Esophagus muscularis mucosa (tissue), 4 donors: ENCODE measurements at regions of chr15 and their contacts with region 1.

Region 1: DNA sequence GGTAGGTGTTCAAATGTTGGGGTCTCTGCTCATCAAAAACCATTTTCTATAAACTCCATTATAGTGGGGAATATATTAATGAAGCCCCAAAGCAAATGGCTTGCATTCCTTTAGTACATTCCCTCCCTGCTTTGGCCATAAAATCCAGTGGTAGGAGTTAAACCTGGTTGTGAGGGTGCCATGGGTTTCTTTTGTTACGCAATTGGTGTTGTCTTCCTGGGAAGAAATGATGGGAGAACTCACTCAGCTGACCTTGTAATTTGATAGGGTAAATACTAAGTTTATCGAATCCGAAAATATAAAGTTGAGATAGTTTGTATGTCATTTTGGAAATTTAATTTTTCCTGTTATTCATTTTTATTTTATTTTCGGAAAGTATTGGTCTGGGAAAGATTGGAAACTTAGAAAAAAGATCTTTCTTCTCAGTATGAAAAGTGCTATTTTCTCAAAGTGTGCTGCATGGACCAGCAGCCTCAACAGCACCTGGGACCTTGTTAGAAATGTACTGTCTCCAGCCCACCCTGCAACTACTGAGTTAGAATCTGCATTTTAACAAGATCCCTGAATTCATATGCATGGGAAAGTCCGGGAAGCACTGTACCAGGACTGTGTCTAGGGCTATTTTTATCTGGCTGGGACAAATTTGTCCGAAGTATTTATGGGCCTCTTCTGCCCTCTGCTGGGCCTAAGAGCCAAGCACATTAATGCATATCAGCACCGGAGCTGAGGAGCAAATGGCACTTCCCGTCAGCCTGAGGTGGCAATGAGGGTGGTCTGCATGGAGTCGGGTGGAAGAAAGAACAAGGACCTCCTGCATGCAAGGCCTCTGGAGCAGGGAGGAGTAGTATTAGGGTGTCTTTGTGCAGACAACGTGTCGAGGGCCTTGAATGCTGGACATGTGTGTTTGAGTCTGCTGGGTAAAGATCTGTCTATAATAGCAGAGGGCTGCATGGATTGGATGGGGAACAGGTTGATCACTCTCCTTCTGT is 54.7 kb downstream of the FAM81A start:
- DNase-seq: no peak
- H3K4me3 ChIP-seq: no peak overlapping the region
- H3K27ac ChIP-seq: no peak overlapping the region
- H3K4me1 ChIP-seq: peaks cover 6 to 10% (median 7%) of the 10 kb centered on the region in 4 donors
- H3K27me3 ChIP-seq: no peaks in the 10 kb centered on the region
- CTCF ChIP-seq: peak; percentile 79 to 86 (median 85)
- EP300 ChIP-seq: no peak
- POLR2A ChIP-seq: no peak

Region 2: DNA sequence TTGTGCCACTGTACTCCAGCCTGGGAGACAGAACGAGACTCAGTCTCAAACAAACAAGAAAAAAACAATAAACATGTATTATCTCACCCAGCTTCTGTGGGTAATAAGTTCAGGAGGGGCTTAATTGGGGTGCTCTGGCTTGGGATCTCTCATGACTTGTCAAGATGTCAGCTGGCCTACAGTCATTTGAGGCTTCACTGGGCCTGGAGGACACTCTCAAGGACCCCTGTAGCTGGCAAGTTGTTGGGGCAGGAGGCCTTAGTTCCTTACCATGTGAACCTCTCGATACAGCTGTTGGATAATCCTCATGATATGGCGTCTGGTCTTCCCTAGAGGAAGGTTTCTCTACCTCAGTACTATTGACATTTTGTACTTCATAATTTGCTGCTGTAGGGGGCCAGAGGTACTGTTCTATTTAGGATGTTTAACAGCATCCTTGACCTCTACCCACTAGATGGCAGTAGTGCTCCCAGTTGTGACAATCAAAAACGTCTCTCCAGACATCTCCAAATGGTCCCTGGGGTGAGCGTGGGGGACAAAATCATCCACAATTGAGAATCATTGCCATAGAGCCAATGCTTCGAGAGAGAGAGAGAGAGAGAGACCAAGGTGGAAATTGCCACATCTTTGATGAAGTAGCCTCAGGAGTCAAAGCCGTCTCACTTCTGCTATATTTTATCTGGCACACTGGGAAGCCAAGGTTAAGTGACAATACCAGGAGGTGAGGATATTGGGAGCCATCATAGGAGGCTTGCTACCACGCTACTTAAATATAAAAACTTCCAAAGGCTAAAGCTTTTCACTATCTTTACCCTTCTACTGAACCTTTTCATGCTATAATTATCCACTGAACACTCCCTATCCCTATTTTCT is 535.3 kb before region 1 on chr15:
- intact Hi-C with region 1: loop called (anchors 5 kb)
- DNase-seq: no peak
- H3K4me3 ChIP-seq: no peak overlapping the region
- H3K27ac ChIP-seq: no peak overlapping the region
- H3K4me1 ChIP-seq: no peaks in the 10 kb centered on the region
- H3K27me3 ChIP-seq: no peaks in the 10 kb centered on the region
- CTCF ChIP-seq: peak; percentile 53 to 74 (median 55)
- EP300 ChIP-seq: no peak
- POLR2A ChIP-seq: no peak

Region 3: DNA sequence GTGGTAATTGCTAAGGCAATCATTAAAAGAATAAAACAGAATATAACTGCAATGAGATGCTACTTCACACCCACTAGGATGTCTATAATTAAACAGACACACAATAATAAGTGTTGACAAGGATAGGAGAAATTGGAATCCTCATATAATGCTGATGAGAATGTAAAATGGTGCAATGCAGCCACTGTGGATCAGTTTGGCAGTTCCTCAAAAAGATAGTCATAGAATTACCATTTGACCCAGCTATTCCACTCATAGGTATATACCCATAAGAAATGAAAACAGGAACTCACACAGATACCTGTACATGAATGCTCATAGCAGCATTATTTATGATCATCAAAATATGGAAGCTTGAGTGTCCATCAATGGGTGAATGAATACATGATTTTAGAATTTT is 514.8 kb before region 1 on chr15:
- intact Hi-C with region 1: loop called (anchors 5 kb)
- DNase-seq: no peak
- H3K4me3 ChIP-seq: no peak overlapping the region
- H3K27ac ChIP-seq: no peak overlapping the region
- H3K4me1 ChIP-seq: peaks cover 0 to 12% (median 5%) of the 10 kb centered on the region in 4 donors
- H3K27me3 ChIP-seq: no peaks in the 10 kb centered on the region
- CTCF ChIP-seq: no peak
- EP300 ChIP-seq: no peak
- POLR2A ChIP-seq: no peak

Region 4: GRCh38 chr15:59104912-59105732 is 387.6 kb before region 1 on chr15 and contains the start of gene CCNB2:
- intact Hi-C with region 1: loop called (anchors 10 kb)
- DNase-seq: peak; percentile 95
- H3K4me3 ChIP-seq: peak within 1 kb of the TSS; percentile 57 to 68 (median 58)
- H3K27ac ChIP-seq: peak within 1 kb of the TSS in 3 of 4 donors; percentile 23 to 47 (median 34)
- H3K4me1 ChIP-seq: peaks cover 4 to 15% (median 13%) of the 10 kb centered on the region in 4 donors
- H3K27me3 ChIP-seq: no peaks in the 10 kb centered on the region
- CTCF ChIP-seq: no peak
- EP300 ChIP-seq: no peak
- POLR2A ChIP-seq: no peak
- total RNA-seq, gene CCNB2: 1.6 TPM in 1 of 4 donors, not detected in the others

Region 5: DNA sequence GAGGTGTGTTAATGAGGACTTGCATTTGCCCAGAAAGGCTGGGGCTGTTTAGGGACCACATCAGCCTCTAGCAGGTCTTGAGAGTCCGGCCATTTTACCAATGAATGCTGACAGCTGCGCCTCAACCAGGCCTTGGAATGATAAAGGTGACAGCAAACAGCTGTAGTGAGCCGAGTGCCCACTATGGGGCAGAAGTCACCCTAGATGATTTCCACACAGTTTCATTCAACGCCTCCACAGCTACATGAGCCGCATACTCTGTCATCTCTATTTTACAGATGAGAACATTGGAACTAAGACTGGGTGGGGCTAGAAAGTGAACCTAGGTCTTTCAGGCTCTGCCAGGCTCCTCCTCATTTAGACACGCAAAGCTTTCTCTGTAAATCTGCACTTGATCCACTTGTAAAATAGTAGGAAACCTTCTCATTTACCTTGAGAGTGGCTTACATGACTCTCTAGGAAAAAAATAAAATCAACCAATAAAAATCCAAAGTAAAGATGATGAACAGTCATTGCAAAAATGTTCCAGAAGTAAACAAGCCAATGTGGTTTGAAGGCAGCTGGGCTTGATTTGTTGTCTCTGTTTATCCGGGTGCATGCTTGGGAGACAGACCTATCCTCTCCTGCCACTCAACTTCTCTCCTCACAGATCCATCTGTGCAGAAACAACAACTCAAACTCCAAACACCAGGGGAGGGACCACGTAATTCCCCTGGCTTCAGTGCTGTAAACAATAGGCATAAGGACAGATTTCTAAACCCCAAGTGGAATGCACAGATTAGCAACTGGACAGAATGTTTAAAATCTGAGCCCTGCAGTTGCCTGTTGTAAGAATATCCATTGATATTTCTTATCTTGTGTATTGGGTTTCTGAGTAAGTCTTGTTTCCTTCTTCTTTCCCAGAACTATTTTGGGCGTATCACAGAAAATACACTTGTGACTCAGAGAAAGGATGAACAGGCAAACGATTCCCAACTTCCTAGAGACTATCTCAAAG is 317.6 kb before region 1 on chr15:
- intact Hi-C with region 1: loop called (anchors 10 kb)
- DNase-seq: no peak
- H3K4me3 ChIP-seq: no peak overlapping the region
- H3K27ac ChIP-seq: peak overlapping the region; percentile 10 to 38 (median 24)
- H3K4me1 ChIP-seq: peaks cover 11 to 18% (median 14%) of the 10 kb centered on the region in 4 donors
- H3K27me3 ChIP-seq: no peaks in the 10 kb centered on the region
- CTCF ChIP-seq: peak; percentile 27 to 51 (median 40)
- EP300 ChIP-seq: no peak
- POLR2A ChIP-seq: no peak

Region 6: DNA sequence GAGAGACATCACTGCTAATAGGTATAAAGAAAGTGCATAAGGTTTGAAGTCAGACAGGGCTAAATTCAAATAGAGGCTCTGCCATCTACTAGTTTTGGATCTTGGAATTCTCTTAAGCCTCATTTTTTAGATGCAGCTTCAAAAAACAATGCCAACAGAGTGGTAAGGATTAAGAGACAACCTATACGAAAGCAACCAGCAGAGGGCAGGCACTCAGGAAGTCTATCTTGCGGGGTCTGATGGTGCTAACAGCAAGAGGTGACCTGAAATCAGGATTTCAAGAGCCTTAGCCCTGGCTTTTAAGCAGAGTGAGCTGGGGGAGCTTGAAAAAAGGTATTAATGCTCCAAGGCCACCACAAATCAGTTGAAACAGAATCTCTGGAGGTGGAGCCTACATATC is 245.3 kb before region 1 on chr15:
- intact Hi-C with region 1: loop called (anchors 2 kb)
- DNase-seq: no peak
- H3K4me3 ChIP-seq: no peak overlapping the region
- H3K27ac ChIP-seq: no peak overlapping the region
- H3K4me1 ChIP-seq: peaks cover 0 to 6% (median 0%) of the 10 kb centered on the region in 4 donors
- H3K27me3 ChIP-seq: no peaks in the 10 kb centered on the region
- CTCF ChIP-seq: peak; percentile 45 to 52 (median 51)
- EP300 ChIP-seq: no peak
- POLR2A ChIP-seq: no peak

Region 7: GRCh38 chr15:59779110-59779509 is 286.4 kb after region 1 on chr15:
- intact Hi-C with region 1: no loop called
- DNase-seq: no peak
- H3K4me3 ChIP-seq: no peak overlapping the region
- H3K27ac ChIP-seq: no peak overlapping the region
- H3K4me1 ChIP-seq: no peaks in the 10 kb centered on the region
- H3K27me3 ChIP-seq: peaks cover 0 to 3% (median 0%) of the 10 kb centered on the region in 4 donors
- CTCF ChIP-seq: no peak
- EP300 ChIP-seq: no peak
- POLR2A ChIP-seq: no peak

Region 8: DNA sequence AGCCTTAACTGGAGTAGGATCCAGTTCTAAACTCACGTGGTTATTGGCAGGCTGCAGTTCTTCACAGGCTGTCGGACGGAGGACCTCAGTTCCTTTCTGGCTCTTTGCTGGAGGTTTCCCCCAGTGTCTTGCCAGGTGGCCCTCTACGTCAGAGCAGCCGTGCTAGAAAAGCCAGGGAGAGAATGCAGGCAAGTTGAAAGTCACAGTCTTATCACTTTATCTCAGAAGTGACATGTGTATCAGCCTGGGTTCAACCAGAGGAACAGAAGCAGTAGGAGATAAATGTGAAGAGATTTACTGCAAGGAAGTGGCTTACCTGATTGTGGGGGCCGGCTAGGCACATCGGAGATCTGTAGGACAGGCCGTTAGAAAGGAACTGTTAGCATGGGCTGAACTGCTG is 321.7 kb after region 1 on chr15:
- intact Hi-C with region 1: no loop called
- DNase-seq: peak; percentile 47
- H3K4me3 ChIP-seq: no peak overlapping the region
- H3K27ac ChIP-seq: no peak overlapping the region
- H3K4me1 ChIP-seq: no peaks in the 10 kb centered on the region
- H3K27me3 ChIP-seq: peaks cover 0 to 26% (median 0%) of the 10 kb centered on the region in 4 donors
- CTCF ChIP-seq: no peak
- EP300 ChIP-seq: no peak
- POLR2A ChIP-seq: no peak